Naive thymus-derived CD4-positive, alpha-beta T cell (primary cell): ENCODE measurements at regions of chr1 and their contacts with region 1.

Region 1: GRCh38 chr1:37946703-37947360 is at the start of gene INPP5B:
- DNase-seq: peak; percentile 25 to 79 (median 53)
- ATAC-seq: peak; percentile 91
- H3K4me3 ChIP-seq: peak within 1 kb of the TSS; percentile 61
- H3K4me3 Mint-ChIP-seq: peak within 1 kb of the TSS; percentile 81 to 98 (median 92)
- H3K27ac ChIP-seq: peak within 1 kb of the TSS; percentile 62
- H3K27ac Mint-ChIP-seq: peak within 1 kb of the TSS; percentile 66 to 97 (median 89)
- H3K4me1 ChIP-seq: peaks cover 0 to 7% of the 10 kb centered on the region in 2 donors
- H3K4me1 Mint-ChIP-seq: peaks cover 13 to 26% (median 15%) of the 10 kb centered on the region in 7 donors
- H3K27me3 ChIP-seq: no peaks in the 10 kb centered on the region
- H3K27me3 Mint-ChIP-seq: no peaks in the 10 kb centered on the region
- total RNA-seq, gene INPP5B: 23.3 to 35.7 (median 30.6) TPM

Region 2: DNA sequence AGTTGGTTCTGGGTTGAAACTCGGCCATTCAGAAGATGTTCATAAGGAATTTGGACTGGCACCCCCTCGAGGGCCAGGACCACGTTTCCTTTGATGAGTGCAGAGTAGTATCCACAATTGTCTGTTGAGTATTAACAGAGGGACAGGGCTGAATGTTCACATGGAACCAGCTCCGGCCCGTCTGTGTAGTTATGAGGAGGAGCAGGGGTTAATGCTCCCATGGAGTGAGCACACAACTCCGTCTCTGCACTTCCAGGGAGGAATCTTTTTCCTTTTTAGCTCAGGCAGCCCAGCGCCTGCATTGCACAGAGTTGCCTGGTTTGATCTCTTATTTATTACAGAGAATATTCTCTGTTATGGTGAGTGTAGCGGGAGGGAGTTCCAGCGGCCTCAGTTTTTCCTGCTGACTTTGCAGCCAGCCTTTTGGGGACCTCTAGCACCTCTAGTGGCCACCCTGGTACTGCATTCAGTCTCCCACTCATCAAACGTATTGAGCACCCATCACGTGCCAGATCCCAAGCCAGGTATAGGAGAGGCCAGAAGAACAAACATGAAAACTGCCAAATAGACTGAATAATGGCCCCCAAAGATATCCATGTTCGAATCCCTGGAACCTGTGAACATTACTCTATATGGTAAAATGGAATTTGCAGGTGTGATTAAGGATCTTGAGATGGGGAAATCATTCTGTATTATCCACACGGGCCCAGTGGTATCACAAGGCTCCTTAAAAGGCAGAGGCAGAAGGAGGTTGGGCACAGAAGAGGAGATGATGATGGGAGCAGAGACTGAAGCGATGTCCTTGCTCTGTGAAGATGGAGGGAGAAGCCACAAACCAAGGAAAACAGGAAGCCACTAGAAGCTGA is 1296.4 kb before region 1 on chr1:
- CTCF ChIA-PET with region 1: no interaction called
- POLR2A ChIA-PET with region 1: no interaction called
- intact Hi-C with region 1: no loop called
- DNase-seq: peak; percentile 10 to 62 (median 26)
- ATAC-seq: peak; percentile 80
- H3K4me3 ChIP-seq: no peak overlapping the region
- H3K4me3 Mint-ChIP-seq: no peak overlapping the region
- H3K27ac ChIP-seq: no peak overlapping the region
- H3K27ac Mint-ChIP-seq: no peak overlapping the region
- H3K4me1 ChIP-seq: no peaks in the 10 kb centered on the region
- H3K4me1 Mint-ChIP-seq: peaks cover 0 to 12% (median 5%) of the 10 kb centered on the region in 7 donors
- H3K27me3 ChIP-seq: no peaks in the 10 kb centered on the region
- H3K27me3 Mint-ChIP-seq: peaks cover 12 to 52% (median 46%) of the 10 kb centered on the region in 5 donors

Region 3: DNA sequence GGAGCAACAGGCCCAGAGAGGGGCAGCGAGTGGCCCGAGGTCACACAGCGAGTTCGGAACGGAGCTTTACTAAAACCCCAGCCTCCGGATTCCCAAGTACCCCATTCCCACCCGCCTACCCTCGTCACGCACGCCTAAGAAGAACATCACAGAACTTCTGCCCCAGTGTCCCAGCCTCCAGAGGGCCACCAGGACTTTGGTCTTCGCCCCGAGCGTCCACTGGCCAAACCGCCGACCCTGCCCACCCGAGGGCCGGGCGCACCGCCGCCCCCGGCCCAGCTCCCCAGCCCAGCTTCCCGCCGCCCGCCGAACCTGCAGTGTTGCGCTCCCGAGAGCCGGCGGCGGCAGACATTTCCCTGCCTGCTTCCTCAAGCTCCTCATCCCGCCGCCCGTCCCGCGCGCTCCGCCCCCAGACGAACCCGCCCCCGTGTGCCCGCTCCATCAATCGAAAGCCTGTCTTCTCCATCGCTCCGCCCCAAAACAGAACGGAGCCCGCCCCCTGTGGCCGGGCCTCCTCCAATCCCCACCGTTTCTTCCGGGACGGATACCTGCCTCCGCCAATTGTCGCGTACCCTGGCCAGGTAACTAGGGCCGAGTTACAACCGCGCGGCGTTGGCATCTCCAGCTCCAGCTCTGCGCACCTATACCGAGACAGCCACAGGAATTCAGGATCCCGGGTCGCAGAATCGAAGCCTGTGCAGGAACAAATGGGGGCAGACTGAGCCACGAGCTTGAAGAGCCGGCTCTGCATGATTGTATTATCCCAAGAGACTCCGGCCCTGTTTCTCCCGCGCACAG is 15.3 kb before region 1 on chr1:
- CTCF ChIA-PET with region 1: no interaction called
- POLR2A ChIA-PET with region 1: interaction called, 5 read pairs
- intact Hi-C with region 1: loop called (anchors 2 kb)
- DNase-seq: peak; percentile 92 to 97 (median 96)
- ATAC-seq: peak; percentile 100
- H3K4me3 ChIP-seq: peak overlapping the region; percentile 67
- H3K4me3 Mint-ChIP-seq: peak overlapping the region; percentile 89 to 99 (median 98)
- H3K27ac ChIP-seq: peak overlapping the region; percentile 79
- H3K27ac Mint-ChIP-seq: peak overlapping the region; percentile 78 to 94 (median 87)
- H3K4me1 ChIP-seq: peaks cover 15 to 17% of the 10 kb centered on the region in 2 donors
- H3K4me1 Mint-ChIP-seq: peaks cover 22 to 52% (median 39%) of the 10 kb centered on the region in 7 donors
- H3K27me3 ChIP-seq: no peaks in the 10 kb centered on the region
- H3K27me3 Mint-ChIP-seq: peaks cover 0 to 3% (median 0%) of the 10 kb centered on the region in 5 donors